Ovary (tissue), 10 donors: ENCODE measurements at regions of chr18 and their contacts with region 1.

Region 1: DNA sequence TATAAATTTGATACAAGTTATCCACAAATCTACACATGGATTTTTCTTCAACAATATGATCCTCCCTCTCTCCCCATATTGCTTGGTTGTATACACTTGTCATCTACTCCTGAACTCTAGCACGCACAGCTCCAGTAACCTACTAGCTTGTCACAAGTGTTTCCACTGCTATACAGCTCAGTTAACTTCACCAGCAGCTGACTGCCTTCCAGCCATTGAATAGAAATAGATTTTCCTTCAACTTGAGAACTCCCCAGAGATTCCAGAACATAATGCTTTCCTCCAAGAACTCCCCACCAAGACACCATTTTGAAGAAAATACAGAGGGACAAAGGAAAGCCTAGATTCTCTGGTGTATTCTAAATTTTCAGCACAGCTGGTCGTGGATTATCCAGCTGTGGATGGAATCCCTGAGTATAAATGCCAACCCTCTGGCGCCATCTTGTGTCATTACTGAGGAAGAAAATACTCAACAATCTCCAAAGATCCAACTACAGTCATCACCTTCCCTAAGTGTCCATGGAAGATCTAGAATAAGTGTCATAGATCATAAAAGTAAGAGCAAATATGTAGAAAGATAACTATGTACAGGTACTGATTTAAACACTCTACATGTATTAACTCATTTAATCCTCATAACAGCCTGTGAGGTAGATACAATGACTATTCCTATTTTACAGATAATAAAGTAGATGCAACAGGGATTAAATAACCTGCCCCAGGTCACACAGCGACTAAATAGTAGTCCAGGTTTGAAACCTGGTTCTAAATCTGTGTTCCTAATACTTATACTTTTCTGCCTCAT is 156.7 kb downstream of the ARHGAP28 start:
- DNase-seq: peak in 4 of 5 donors; percentile 46 to 71 (median 56)
- H3K4me3 ChIP-seq: no peak overlapping the region
- H3K27ac ChIP-seq: no peak overlapping the region
- H3K4me1 ChIP-seq: peaks cover 2% of the 10 kb centered on the region
- H3K27me3 ChIP-seq: no peaks in the 10 kb centered on the region
- CTCF ChIP-seq: peak; percentile 67 to 77 (median 73)
- EP300 ChIP-seq: no peak
- POLR2A ChIP-seq: no peak

Region 2: DNA sequence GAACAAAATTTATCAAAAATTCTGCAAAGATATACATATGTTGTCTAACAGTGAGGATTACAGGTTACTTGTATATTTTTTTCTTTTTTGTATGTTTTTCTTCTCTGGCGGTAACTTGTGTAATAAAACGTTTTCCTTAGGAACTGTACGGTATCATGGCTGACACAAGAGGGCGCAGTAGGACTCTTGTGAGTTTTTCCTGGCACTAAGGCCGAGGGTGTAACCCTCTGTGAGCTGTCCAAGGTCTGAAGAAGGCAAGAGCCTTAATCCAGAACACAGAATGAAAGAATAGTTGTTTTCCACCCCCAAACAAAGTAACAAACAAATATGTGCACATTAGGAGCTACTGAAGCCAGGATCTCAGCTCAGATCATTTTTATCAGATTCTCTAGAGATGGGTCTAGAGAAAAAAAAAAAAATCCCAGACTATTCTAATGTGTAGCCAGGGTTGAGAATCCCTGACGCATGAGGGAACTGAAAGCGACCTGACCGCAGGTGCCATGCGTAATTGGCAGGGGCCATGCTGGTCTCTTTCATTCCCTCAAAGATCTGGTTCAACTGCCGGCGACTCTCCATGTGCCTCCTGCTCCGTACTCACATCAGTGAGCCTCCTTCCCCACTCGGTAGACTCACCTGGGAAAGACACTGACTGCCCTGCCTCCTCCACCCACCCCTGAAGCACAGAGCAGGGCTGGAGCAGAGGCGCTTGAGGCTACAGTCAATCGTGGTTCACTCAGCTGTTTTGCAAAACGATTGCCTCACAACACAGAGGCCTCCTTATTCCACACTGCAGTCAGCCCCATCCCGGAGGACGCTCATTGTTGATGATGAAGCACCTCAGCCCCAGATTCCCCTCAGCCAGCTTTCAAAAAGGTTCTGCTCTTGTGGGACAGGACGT is 1017.7 kb before region 1 on chr18:
- intact Hi-C with region 1: loop called in 2 of 4 experiments (anchors 5 to 10 kb)
- DNase-seq: peak; percentile 59 to 75 (median 70)
- H3K4me3 ChIP-seq: no peak overlapping the region
- H3K27ac ChIP-seq: no peak overlapping the region
- H3K4me1 ChIP-seq: no peaks in the 10 kb centered on the region
- H3K27me3 ChIP-seq: no peaks in the 10 kb centered on the region
- CTCF ChIP-seq: peak; percentile 34 to 68 (median 58)
- EP300 ChIP-seq: no peak
- POLR2A ChIP-seq: no peak

Region 3: GRCh38 chr18:5879479-5879882 is 1006.7 kb before region 1 on chr18:
- intact Hi-C with region 1: loop called in 1 of 4 experiments (anchors 5 kb)
- DNase-seq: no peak
- H3K4me3 ChIP-seq: no peak overlapping the region
- H3K27ac ChIP-seq: no peak overlapping the region
- H3K4me1 ChIP-seq: no peaks in the 10 kb centered on the region
- H3K27me3 ChIP-seq: no peaks in the 10 kb centered on the region
- CTCF ChIP-seq: peak; percentile 52 to 69 (median 63)
- EP300 ChIP-seq: no peak
- POLR2A ChIP-seq: no peak

Region 4: GRCh38 chr18:6543330-6543908 is 342.8 kb before region 1 on chr18:
- intact Hi-C with region 1: loop called in 3 of 4 experiments (anchors 2 to 5 kb)
- DNase-seq: no peak
- H3K4me3 ChIP-seq: no peak overlapping the region
- H3K27ac ChIP-seq: no peak overlapping the region
- H3K4me1 ChIP-seq: peaks cover 5% of the 10 kb centered on the region
- H3K27me3 ChIP-seq: no peaks in the 10 kb centered on the region
- CTCF ChIP-seq: peak; percentile 42 to 63 (median 61)
- EP300 ChIP-seq: no peak
- POLR2A ChIP-seq: no peak

Region 5: DNA sequence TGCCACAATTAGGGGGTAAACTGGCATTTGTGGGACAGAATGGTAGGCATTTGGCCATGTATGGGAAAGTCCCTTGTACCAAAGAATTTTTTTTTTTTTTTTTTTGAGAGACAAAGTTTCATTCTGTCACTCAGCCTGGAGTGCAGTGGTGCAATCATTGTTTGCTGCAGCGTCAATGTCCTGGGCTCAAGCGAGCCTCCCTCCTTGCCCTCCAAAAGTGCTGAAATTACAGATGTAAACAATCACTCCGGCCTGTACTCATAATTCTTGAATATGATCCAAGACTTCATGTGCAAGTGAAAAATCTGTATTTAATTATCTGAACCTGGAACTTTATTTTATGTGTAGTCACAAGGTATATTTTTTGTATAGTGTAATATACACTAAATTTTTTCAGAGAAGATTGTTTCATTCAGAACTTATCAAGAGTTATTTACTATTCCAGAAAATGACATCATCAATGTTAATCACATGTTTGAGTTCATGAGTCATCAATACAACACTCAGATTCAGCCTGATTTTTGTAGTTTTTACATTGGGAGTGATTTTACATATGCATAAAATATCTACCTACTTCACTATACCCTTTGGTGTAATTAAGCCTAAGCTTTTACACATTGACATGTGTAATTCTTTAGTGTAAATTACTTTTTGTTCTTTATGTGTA is 332.8 kb before region 1 on chr18:
- intact Hi-C with region 1: loop called in 1 of 4 experiments (anchors 5 kb)
- DNase-seq: no peak
- H3K4me3 ChIP-seq: no peak overlapping the region
- H3K27ac ChIP-seq: no peak overlapping the region
- H3K4me1 ChIP-seq: peaks cover 2% of the 10 kb centered on the region
- H3K27me3 ChIP-seq: no peaks in the 10 kb centered on the region
- CTCF ChIP-seq: no peak
- EP300 ChIP-seq: no peak
- POLR2A ChIP-seq: no peak